ENCODE measurements at regions of chr7 and their contacts with region 1.

Region 1: DNA sequence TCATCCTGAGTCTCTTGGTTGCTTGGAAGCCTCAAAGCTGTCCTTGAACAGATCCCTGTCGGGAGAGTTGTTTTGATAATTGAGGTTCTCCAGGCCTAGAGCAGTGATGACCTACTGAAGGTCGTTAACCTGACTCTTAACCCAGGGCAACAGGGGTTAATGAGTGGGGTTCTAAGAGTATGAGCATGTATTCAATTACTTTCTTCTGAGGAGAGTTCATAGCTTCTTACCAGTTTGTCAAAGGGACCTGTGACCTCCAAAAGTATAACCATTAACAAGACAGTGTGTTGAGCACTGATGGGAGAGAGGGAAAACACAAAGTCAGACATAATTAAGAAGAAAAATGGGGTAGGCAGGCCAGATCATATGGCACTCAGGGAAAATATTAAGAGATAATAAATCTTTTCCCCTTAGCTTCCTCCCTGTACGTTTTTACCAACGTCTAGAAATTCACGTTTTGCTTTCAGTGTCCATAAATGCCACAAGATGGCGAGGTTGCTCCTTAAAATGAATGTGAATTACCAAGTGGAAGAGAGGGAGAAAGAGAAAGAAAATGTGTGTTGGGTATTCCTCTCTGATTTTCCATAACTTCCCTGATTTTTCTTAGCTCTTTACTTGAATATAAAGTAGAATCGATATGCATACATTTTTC is 97.6 kb downstream of the SUGCT start:
- DNase-seq: peak; percentile 57
- H3K4me3 ChIP-seq: no peak overlapping the region
- H3K27ac ChIP-seq: peak overlapping the region; percentile 59 to 85
- H3K4me1 ChIP-seq: peaks cover 0 to 4% of the 10 kb centered on the region in 2 experiments; a peak in 1 of 4 replicates
- H3K27me3 ChIP-seq: no peaks in the 10 kb centered on the region
- CTCF ChIP-seq: peak; percentile 97
- EP300 ChIP-seq: no peak; a peak in 1 of 4 replicates
- RAD21 ChIP-seq: peak; percentile 97

Region 2: GRCh38 chr7:40077849-40078248 is 154.5 kb before region 1 on chr7:
- CTCF ChIA-PET with region 1: no interaction called
- POLR2A ChIA-PET with region 1: no interaction called
- DNase-seq: no peak
- H3K4me3 ChIP-seq: no peak overlapping the region
- H3K27ac ChIP-seq: no peak overlapping the region
- H3K4me1 ChIP-seq: no peaks in the 10 kb centered on the region
- H3K27me3 ChIP-seq: no peaks in the 10 kb centered on the region
- CTCF ChIP-seq: no peak
- EP300 ChIP-seq: no peak
- RAD21 ChIP-seq: no peak

Region 3: GRCh38 chr7:40165216-40165615 is 67.2 kb before region 1 on chr7:
- CTCF ChIA-PET with region 1: interaction called, 10 read pairs
- POLR2A ChIA-PET with region 1: no interaction called
- DNase-seq: peak; percentile 44
- H3K4me3 ChIP-seq: no peak overlapping the region
- H3K27ac ChIP-seq: no peak overlapping the region
- H3K4me1 ChIP-seq: peaks cover 0 to 3% of the 10 kb centered on the region in 2 experiments; a peak in 1 of 4 replicates
- H3K27me3 ChIP-seq: no peaks in the 10 kb centered on the region
- CTCF ChIP-seq: no peak
- EP300 ChIP-seq: no peak
- RAD21 ChIP-seq: no peak

Region 4: GRCh38 chr7:40221836-40222235 is 10.5 kb before region 1 on chr7:
- CTCF ChIA-PET with region 1: interaction called, 37 read pairs
- POLR2A ChIA-PET with region 1: no interaction called
- DNase-seq: no peak
- H3K4me3 ChIP-seq: no peak overlapping the region
- H3K27ac ChIP-seq: peak overlapping the region; percentile 87 to 99
- H3K4me1 ChIP-seq: peaks cover 0 to 42% of the 10 kb centered on the region in 2 experiments
- H3K27me3 ChIP-seq: no peaks in the 10 kb centered on the region
- CTCF ChIP-seq: no peak
- EP300 ChIP-seq: peak in 1 of 2 experiments; percentile 97; a peak in 3 of 4 replicates
- RAD21 ChIP-seq: no peak

Region 5: DNA sequence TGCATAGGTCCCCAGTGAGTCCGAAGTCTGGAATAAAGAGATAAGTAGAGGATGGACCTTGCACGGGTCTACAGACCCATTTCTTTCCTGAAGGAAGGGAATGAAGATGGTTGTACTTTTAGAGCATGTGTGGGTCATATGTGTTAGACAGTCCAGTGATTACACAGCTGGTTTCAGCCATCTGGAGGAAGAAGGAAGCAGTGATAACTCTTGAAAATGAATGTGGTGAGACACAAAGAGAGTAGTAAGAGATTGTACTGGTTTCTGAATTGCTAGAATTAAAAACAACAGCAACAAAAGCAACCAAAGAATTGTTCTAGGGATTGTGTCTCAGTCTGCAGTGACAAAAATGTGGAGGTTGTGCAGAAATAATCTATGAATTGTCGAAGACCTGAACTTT is 161.3 kb after region 1 on chr7:
- CTCF ChIA-PET with region 1: no interaction called
- POLR2A ChIA-PET with region 1: no interaction called
- DNase-seq: no peak
- H3K4me3 ChIP-seq: no peak overlapping the region
- H3K27ac ChIP-seq: no peak overlapping the region
- H3K4me1 ChIP-seq: no peaks in the 10 kb centered on the region; a peak in 1 of 4 replicates
- H3K27me3 ChIP-seq: no peaks in the 10 kb centered on the region
- CTCF ChIP-seq: no peak
- EP300 ChIP-seq: no peak
- RAD21 ChIP-seq: no peak

Region 6: DNA sequence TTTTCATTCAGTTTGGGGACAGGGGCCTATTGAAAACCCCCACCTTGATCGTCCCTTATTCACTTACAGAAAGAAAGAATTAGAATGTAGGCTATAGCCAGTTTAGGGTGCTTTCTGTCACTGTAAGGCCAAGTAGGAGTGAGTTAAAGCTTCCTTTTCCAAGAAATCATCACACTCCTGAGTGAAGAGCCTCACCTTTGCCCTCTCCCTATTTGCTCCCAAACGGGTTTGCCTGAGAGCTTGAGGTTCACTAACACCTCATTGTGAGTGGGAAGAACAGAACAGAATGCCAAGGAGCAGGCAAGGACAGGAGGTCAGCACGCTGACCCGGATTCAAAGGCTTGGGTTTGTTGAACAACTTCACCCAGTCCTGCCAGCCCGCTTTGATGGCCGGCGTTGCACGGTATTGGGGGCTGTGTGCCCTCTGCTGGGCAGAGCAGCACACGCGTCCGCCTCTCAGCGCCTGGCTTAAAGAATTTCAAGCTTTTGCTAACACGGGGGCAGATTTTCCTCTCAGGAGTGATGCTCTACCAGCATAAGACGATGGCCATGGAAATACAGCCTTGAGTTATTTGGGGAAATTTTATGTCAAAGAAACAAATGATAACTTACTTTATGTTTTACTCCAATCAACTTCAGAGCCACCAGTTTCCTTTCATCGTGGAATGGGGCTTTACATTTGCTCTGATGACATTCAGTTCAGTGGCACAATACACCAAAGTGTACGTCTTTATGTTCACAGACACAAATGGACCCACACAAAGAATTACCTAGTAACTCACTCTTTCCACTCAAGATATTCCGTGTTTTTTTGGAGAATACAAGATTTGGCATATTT is 372.5 kb after region 1 on chr7:
- CTCF ChIA-PET with region 1: interaction called, 43 read pairs
- POLR2A ChIA-PET with region 1: no interaction called
- DNase-seq: peak; percentile 61
- H3K4me3 ChIP-seq: peak overlapping the region in 1 of 2 experiments; percentile 1; a peak in 1 of 4 replicates
- H3K27ac ChIP-seq: no peak overlapping the region
- H3K4me1 ChIP-seq: peaks cover 0 to 12% of the 10 kb centered on the region in 2 experiments; a peak in 2 of 4 replicates
- H3K27me3 ChIP-seq: no peaks in the 10 kb centered on the region
- CTCF ChIP-seq: peak; percentile 60
- EP300 ChIP-seq: no peak
- RAD21 ChIP-seq: peak; percentile 79

Region 7: GRCh38 chr7:41705109-41705901 is 1472.9 kb after region 1 on chr7:
- CTCF ChIA-PET with region 1: interaction called, 86 read pairs
- POLR2A ChIA-PET with region 1: no interaction called
- DNase-seq: peak; percentile 96
- H3K4me3 ChIP-seq: peak overlapping the region; percentile 55 to 73
- H3K27ac ChIP-seq: peak overlapping the region; percentile 92 to 93
- H3K4me1 ChIP-seq: peaks cover 23 to 24% of the 10 kb centered on the region in 2 experiments
- H3K27me3 ChIP-seq: no peaks in the 10 kb centered on the region
- CTCF ChIP-seq: peak; percentile 98
- EP300 ChIP-seq: peak in 1 of 2 experiments; percentile 48; a peak in 1 of 4 replicates
- RAD21 ChIP-seq: peak; percentile 92

Region 8: GRCh38 chr7:41731492-41732435 is 1499.4 kb after region 1 on chr7:
- CTCF ChIA-PET with region 1: interaction called, 31 read pairs
- POLR2A ChIA-PET with region 1: no interaction called
- DNase-seq: no peak
- H3K4me3 ChIP-seq: no peak overlapping the region; a peak in 1 of 4 replicates
- H3K27ac ChIP-seq: no peak overlapping the region
- H3K4me1 ChIP-seq: peaks cover 0 to 4% of the 10 kb centered on the region in 2 experiments; a peak in 1 of 4 replicates
- H3K27me3 ChIP-seq: no peaks in the 10 kb centered on the region
- CTCF ChIP-seq: peak; percentile 84
- EP300 ChIP-seq: no peak
- RAD21 ChIP-seq: peak; percentile 77

Measured in SK-N-SH (cell line).